Activated T-helper 1 cell treated with anti-CD3 and anti-CD28 coated beads, Interleukin-12 subunit alpha, Interleukin-12 subunit beta, Interleukin-2, Interleukin-4 antibody, amounts not matched to agents 30 ng/mL and 10 ng/mL and 1 ng/mL, durations not matched to agents 14 hours and 24 hours and 36 hours (primary cell): ENCODE measurements at regions of chr1 and their contacts with region 1.

Region 1: GRCh38 chr1:184075055-184076029 is 23.8 kb downstream of the TSEN15 start:
- DNase-seq: no peak
- H3K4me3 Mint-ChIP-seq: no peak overlapping the region
- H3K27ac Mint-ChIP-seq: no peak overlapping the region
- H3K4me1 Mint-ChIP-seq: peaks cover 19% of the 10 kb centered on the region
- H3K27me3 Mint-ChIP-seq: no peaks in the 10 kb centered on the region

Region 2: GRCh38 chr1:183922197-183922596 is 153.1 kb before region 1 on chr1:
- intact Hi-C with region 1: no loop called
- DNase-seq: no peak
- H3K4me3 Mint-ChIP-seq: no peak overlapping the region
- H3K27ac Mint-ChIP-seq: no peak overlapping the region
- H3K4me1 Mint-ChIP-seq: no peaks in the 10 kb centered on the region
- H3K27me3 Mint-ChIP-seq: no peaks in the 10 kb centered on the region

Region 3: GRCh38 chr1:184110272-184111204 is 35.2 kb after region 1 on chr1:
- intact Hi-C with region 1: no loop called
- DNase-seq: no peak
- H3K4me3 Mint-ChIP-seq: no peak overlapping the region
- H3K27ac Mint-ChIP-seq: peak overlapping the region; percentile 19
- H3K4me1 Mint-ChIP-seq: peaks cover 19% of the 10 kb centered on the region
- H3K27me3 Mint-ChIP-seq: no peaks in the 10 kb centered on the region

Region 4: DNA sequence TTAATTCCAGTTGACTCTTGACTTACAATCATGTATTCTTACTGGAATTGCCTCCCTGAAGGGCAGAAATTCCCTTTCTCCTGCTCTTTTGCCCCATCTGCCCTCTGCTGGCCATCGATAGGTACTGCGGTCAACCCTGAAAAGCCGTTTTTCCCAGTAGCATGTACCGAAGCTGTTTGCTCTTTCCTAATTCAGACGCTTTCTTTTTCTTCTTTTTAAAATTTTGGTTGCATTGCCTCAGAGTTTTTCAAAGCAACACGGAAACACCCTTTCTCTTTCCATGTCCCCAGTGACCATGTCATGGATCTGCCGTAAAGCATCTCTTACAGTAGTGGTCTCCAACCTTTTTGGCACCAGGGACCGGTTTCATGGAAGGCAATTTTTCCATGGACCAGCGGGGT is 147.3 kb after region 1 on chr1:
- intact Hi-C with region 1: loop called (anchors 1 kb)
- DNase-seq: peak; percentile 22
- H3K4me3 Mint-ChIP-seq: no peak overlapping the region
- H3K27ac Mint-ChIP-seq: no peak overlapping the region
- H3K4me1 Mint-ChIP-seq: peaks cover 7% of the 10 kb centered on the region
- H3K27me3 Mint-ChIP-seq: peaks cover 6% of the 10 kb centered on the region

Region 5: DNA sequence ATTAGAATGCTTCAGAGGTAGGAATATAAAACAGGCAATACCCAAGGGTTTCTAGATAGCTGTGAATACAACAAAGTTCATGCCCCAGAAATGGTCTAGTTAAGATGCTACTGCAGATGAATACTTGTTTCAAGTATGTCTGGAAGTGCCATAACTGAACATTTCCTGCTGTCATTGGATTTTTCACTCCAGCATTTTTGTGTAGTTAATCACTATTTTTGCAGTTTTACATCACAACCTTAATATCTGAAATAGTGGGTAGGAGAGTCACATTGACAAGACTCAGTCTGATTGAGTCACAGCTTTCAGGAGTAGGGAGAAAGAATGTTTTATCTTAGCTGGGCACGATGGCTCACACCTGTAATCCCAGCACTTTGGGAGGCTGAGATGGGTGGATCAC is 185.0 kb after region 1 on chr1:
- intact Hi-C with region 1: no loop called
- DNase-seq: no peak
- H3K4me3 Mint-ChIP-seq: no peak overlapping the region
- H3K27ac Mint-ChIP-seq: no peak overlapping the region
- H3K4me1 Mint-ChIP-seq: no peaks in the 10 kb centered on the region
- H3K27me3 Mint-ChIP-seq: peaks cover 14% of the 10 kb centered on the region

Region 6: DNA sequence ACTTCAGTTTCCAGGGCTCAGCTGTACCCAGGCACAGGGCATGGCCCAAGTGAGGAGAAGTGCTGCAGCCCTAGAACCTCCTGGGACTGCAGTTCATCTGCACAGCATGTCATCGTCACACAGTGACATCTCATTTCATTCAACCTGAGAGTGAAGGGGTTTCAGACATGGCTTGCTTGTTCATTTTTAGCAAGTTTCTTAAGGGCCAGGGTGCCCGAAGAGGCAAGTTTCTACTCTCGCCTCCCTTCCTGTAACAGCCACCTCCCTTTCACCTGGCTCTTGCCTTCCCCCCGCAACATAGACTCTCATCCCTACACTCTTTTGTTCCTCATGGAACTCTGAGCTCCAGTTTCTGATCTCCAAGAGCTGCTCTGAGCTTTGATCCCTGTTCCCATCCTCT is 419.6 kb after region 1 on chr1:
- intact Hi-C with region 1: loop called (anchors 10 kb)
- DNase-seq: no peak
- H3K4me3 Mint-ChIP-seq: no peak overlapping the region
- H3K27ac Mint-ChIP-seq: no peak overlapping the region
- H3K4me1 Mint-ChIP-seq: peaks cover 20% of the 10 kb centered on the region
- H3K27me3 Mint-ChIP-seq: peaks cover 2% of the 10 kb centered on the region

Region 7: DNA sequence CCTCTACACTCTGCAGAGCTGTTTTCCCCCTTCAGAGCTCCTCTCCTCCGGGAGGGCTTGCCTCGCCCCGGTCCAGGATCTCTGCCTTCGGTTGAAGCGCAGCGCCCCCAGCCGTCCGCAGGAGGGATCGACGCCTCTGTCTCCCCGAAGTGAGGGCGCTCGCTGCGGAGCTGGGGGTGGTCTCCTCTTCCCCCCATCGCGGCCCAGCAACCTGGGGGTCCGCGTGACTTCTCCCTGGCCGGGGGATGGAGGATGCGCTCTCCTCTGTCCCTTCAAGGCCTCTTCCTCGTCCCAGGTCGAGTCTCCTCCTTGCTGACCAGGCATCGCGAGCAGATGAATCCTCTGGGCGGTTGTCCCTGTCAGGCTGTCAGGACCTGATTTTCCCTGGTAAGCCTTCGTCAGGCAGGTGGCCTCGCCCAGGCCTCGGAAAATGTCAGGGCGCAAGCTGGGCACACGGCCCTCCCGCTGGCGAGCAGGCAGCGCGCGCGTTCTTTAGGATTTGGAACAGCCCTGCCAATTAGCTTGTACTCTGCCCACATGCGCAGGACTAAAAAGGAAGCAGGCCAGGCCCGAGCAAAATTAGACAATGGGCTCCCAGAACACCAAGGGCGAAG is 588.8 kb after region 1 on chr1:
- intact Hi-C with region 1: loop called (anchors 1 kb)
- DNase-seq: peak; percentile 13
- H3K4me3 Mint-ChIP-seq: no peak overlapping the region
- H3K27ac Mint-ChIP-seq: no peak overlapping the region
- H3K4me1 Mint-ChIP-seq: no peaks in the 10 kb centered on the region
- H3K27me3 Mint-ChIP-seq: peaks cover 18% of the 10 kb centered on the region

Region 8: DNA sequence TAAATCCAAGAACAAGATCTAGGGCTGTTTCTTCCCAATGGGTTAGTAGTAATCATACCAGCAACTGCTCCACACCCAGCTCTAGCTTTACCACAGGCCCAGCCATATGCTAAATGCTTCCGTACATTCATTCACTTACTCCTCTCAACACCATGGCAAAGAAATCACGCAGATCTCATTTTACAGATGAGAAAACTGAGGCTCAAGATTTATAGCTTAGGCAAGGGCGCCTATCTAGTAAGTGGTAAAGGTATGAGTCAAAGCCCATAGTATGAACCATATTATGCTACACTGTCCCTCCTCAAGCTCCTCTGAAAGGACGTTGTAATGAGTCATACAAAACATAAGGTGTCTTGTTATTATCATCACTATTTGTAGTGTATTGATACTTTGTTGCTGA is 816.8 kb after region 1 on chr1:
- intact Hi-C with region 1: loop called (anchors 10 kb)
- DNase-seq: no peak
- H3K4me3 Mint-ChIP-seq: no peak overlapping the region
- H3K27ac Mint-ChIP-seq: peak overlapping the region; percentile 61
- H3K4me1 Mint-ChIP-seq: peaks cover 39% of the 10 kb centered on the region
- H3K27me3 Mint-ChIP-seq: no peaks in the 10 kb centered on the region